Mammary epithelial cell (primary cell): ENCODE measurements at regions of chr16 and their contacts with region 1.

Region 1: DNA sequence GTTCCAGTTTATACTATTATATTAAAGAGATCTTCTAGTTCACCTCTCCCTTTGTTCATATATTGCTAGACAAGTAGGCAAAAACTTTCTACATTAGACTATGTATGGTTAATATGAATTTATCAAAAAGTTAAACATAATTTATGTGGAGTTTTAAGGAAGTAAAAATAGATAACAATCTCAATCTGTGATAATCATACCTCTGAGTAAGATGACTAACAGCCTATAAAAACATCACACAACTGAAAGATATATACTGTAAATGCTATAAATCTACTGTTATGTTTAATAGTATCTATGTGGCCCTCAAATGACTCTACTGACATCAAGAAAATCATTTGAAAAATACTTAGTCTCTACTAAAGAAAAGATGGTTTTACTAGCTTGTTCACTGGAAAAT is 37.1 kb downstream of the AP1G1 start:
- DNase-seq: no peak
- H3K4me3 ChIP-seq: no peak overlapping the region
- H3K27ac ChIP-seq: no peak overlapping the region
- H3K4me1 ChIP-seq: no peaks in the 10 kb centered on the region
- H3K27me3 ChIP-seq: no peaks in the 10 kb centered on the region
- CTCF ChIP-seq: no peak

Region 2: DNA sequence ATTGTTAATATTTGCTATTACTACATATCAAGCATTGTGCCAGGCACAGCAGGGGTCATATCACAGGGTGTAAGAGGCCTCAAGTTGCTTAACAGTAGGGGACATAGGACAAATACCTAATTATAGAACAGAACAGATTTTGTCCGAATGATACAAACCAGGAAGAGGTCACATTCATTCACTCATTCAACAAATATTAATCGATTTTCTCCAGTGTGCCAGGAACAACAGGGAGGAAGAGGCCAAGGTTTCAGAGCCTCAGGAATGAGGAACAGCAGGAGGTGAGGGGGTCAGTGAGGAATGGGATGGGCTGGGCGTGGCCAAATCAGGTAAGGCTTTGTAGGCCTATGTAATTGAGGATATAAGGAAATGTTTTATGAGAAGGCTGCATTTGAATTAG is 256.5 kb before region 1 on chr16:
- CTCF ChIA-PET with region 1: no interaction called
- dilution Hi-C with region 1: no loop called
- in situ Hi-C with region 1: no loop called
- intact Hi-C with region 1: no loop called
- DNase-seq: no peak
- H3K4me3 ChIP-seq: no peak overlapping the region
- H3K27ac ChIP-seq: no peak overlapping the region
- H3K4me1 ChIP-seq: no peaks in the 10 kb centered on the region
- H3K27me3 ChIP-seq: no peaks in the 10 kb centered on the region
- CTCF ChIP-seq: no peak

Region 3: GRCh38 chr16:71693164-71693563 is 78.4 kb before region 1 on chr16:
- CTCF ChIA-PET with region 1: no interaction called
- dilution Hi-C with region 1: loop called (anchors 5 kb)
- in situ Hi-C with region 1: no loop called
- intact Hi-C with region 1: no loop called
- DNase-seq: no peak
- H3K4me3 ChIP-seq: no peak overlapping the region
- H3K27ac ChIP-seq: no peak overlapping the region
- H3K4me1 ChIP-seq: no peaks in the 10 kb centered on the region
- H3K27me3 ChIP-seq: no peaks in the 10 kb centered on the region
- CTCF ChIP-seq: no peak

Region 4: GRCh38 chr16:71711789-71712188 is 59.8 kb before region 1 on chr16:
- CTCF ChIA-PET with region 1: no interaction called
- dilution Hi-C with region 1: no loop called
- in situ Hi-C with region 1: no loop called
- intact Hi-C with region 1: no loop called
- DNase-seq: no peak
- H3K4me3 ChIP-seq: no peak overlapping the region
- H3K27ac ChIP-seq: no peak overlapping the region
- H3K4me1 ChIP-seq: peaks cover 32% of the 10 kb centered on the region
- H3K27me3 ChIP-seq: no peaks in the 10 kb centered on the region
- CTCF ChIP-seq: no peak